Heart left ventricle (tissue), 16 donors: ENCODE measurements at regions of chr16 and their contacts with region 1.

Region 1: GRCh38 chr16:72832621-72833248 is 215.2 kb downstream of the ZFHX3 start:
- DNase-seq: peak; percentile 80 to 92 (median 81)
- ATAC-seq: peak; percentile 81 to 94 (median 94)
- H3K4me3 ChIP-seq: no peak overlapping the region
- H3K27ac ChIP-seq: peak overlapping the region in 4 of 12 donors; percentile 28 to 53 (median 32)
- H3K4me1 ChIP-seq: peaks cover 0 to 34% (median 0%) of the 10 kb centered on the region in 12 donors
- H3K27me3 ChIP-seq: no peaks in the 10 kb centered on the region
- CTCF ChIP-seq: peak in 11 of 12 donors; percentile 93 to 98 (median 96)
- POLR2A ChIP-seq: no peak

Region 2: DNA sequence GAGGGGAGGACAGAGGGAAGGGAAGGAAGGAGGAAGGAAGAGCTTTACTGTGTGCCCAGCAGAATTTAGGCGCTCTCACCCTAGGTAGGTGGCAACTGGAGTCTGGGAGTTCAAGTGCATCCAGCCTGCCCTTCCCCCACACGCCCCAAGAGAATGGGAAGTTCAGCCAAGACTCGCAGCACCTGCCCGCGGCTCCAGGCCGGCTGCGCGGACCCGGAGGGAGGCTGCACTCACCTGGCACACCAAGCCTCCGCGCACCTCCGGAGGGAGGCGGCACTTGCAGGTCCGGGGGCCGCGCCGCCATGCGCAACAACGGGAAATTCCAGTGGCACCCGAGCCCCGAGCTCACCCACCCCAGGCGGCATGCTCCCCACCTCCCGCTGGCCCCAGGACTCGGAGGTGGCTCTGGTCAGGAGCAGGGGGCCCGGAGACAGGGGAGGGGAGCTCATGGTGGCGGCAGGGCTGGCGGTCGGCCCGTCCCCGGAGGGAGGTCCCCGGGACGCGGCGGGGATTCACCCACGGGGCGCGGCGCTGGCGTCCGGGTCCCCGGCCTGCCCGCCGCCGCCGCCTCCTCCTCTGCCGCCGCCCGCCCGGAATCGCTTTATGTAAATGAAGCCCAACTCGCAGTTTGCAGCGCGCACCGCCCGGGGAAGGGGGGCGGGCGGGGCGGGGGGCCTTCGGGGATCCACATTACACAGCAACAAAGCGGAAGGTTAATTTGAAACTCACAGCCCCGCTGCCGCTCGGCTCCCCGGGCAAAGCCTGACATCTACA is 215.0 kb after region 1 on chr16 and contains the start of gene ZFHX3:
- intact Hi-C with region 1: loop called in 8 of 10 experiments (anchors 5 to 10 kb)
- DNase-seq: peak; percentile 72 to 85 (median 82)
- ATAC-seq: peak; percentile 33 to 79 (median 73)
- H3K4me3 ChIP-seq: peak within 1 kb of the TSS; percentile 64 to 98 (median 82)
- H3K27ac ChIP-seq: peak within 1 kb of the TSS; percentile 87 to 97 (median 91)
- H3K4me1 ChIP-seq: peaks cover 6 to 89% (median 58%) of the 10 kb centered on the region in 12 donors
- H3K27me3 ChIP-seq: no peaks in the 10 kb centered on the region
- CTCF ChIP-seq: peak in 6 of 12 donors; percentile 9 to 48 (median 34)
- POLR2A ChIP-seq: peak in 1 of 2 donors; percentile 26
- total RNA-seq, gene ZFHX3: 7.8 to 21.6 (median 14.5) TPM

Region 3: GRCh38 chr16:73058221-73058615 is 225.5 kb after region 1 on chr16:
- intact Hi-C with region 1: loop called in 4 of 10 experiments (anchors 5 to 10 kb)
- DNase-seq: peak; percentile 53 to 76 (median 54)
- ATAC-seq: peak in 2 of 4 donors; percentile 41 to 62
- H3K4me3 ChIP-seq: peak overlapping the region; percentile 57 to 94 (median 78)
- H3K27ac ChIP-seq: peak overlapping the region; percentile 85 to 98 (median 93)
- H3K4me1 ChIP-seq: peaks cover 0 to 56% (median 26%) of the 10 kb centered on the region in 12 donors
- H3K27me3 ChIP-seq: peaks cover 0 to 17% (median 5%) of the 10 kb centered on the region in 9 donors
- CTCF ChIP-seq: peak in 2 of 12 donors; percentile 16 to 31
- POLR2A ChIP-seq: no peak

Region 4: DNA sequence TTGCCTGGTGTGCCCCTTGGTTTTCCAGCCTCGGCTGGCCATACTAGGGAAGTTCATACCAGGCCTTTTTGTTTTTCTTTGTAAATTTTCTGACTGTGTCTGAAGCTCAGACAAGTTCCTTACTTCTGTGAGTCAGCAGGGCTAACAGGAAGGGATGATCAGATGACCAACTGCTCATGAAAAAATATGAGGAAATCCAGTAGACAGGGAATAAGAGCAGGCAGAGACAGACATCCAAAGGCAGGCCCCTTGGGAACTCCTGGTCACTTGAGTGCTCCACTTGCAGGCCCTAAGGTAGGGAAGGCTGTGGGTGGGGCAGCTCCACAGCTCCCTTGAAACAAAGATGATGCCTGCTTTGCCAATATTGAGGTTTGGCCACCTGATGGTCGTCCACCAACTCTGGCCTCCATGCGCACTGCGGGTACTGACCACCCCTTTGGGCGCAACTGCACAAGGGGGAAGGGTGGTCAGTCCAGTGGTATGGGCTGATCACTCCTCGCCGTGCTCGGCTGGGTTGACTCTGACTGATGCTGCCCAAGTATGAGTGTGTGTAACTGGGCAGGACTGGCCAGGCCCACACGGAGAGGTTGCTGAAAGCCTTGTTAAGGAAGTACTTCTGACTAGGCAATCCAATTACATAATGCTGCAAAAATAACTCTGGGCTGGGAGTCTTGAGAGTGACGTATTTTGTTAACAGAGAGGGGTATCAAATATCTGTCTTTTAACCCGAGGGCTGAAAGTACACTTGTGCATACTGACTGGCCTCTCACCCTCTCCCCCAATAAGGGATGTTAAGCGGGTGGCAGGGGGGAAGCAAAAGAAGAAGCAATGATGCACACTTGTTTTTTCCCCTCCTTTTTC is 236.0 kb after region 1 on chr16:
- intact Hi-C with region 1: loop called in 1 of 10 experiments (anchors 5 kb)
- DNase-seq: peak; percentile 78 to 90 (median 82)
- ATAC-seq: peak; percentile 74 to 88 (median 82)
- H3K4me3 ChIP-seq: peak overlapping the region in 3 of 12 donors; percentile 4 to 17 (median 6)
- H3K27ac ChIP-seq: peak overlapping the region; percentile 75 to 96 (median 89)
- H3K4me1 ChIP-seq: peaks cover 3 to 74% (median 60%) of the 10 kb centered on the region in 12 donors
- H3K27me3 ChIP-seq: peaks cover 0 to 30% (median 6%) of the 10 kb centered on the region in 9 donors
- CTCF ChIP-seq: no peak
- POLR2A ChIP-seq: no peak

Region 5: GRCh38 chr16:73196670-73197069 is 363.9 kb after region 1 on chr16:
- intact Hi-C with region 1: loop called (anchors 1 to 5 kb)
- DNase-seq: peak in 4 of 5 donors; percentile 61 to 73 (median 68)
- ATAC-seq: peak; percentile 69 to 93 (median 90)
- H3K4me3 ChIP-seq: no peak overlapping the region
- H3K27ac ChIP-seq: no peak overlapping the region
- H3K4me1 ChIP-seq: no peaks in the 10 kb centered on the region
- H3K27me3 ChIP-seq: peaks cover 0 to 5% (median 0%) of the 10 kb centered on the region in 9 donors
- CTCF ChIP-seq: peak; percentile 51 to 78 (median 69)
- POLR2A ChIP-seq: no peak